Sigmoid colon (tissue), 7 donors: ENCODE measurements at regions of chr13 and their contacts with region 1.

Region 1: DNA sequence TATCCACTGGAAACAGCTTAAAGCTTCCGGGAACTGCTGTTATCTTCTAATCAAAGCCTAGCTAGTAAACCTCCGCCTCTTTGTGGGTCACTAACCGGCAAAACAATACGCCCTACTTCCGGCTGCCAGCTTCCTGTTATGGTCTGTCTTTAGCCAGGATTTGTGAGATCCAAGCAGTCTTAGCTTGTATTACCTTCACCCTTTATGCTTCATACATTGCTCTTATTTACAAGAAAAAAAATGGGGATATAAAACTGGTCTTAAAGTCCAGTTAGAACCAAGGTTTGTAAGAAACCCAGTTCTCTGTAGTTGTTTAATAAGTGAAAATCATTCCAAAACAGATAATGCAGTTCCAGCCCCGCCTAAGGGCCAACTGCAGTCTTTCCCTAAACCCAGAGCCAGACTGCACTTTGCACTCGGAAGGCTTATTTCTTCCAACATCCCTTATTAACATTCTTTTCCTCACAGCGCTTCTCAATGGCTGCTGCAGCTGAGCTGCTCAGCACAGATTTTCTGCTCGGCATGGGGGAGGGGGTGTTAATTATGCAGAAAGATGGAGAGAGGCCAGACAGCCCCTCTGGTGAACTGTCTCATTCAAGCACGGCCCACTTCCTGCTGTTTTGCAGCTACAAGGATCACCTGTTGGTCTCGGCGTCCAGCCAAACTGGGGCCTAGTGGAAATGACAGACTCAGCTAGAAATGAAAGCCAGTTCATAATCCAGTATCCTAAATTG is 368.4 kb downstream of the KLF12 start:
- DNase-seq: peak; percentile 91
- H3K4me3 ChIP-seq: peak overlapping the region in 1 of 4 donors; percentile 18
- H3K27ac ChIP-seq: peak overlapping the region; percentile 62 to 81 (median 72)
- H3K4me1 ChIP-seq: peaks cover 0 to 48% (median 36%) of the 10 kb centered on the region in 4 donors
- H3K27me3 ChIP-seq: no peaks in the 10 kb centered on the region
- CTCF ChIP-seq: no peak
- EP300 ChIP-seq: no peak
- POLR2A ChIP-seq: no peak

Region 2: GRCh38 chr13:72696579-72696978 is 1069.2 kb before region 1 on chr13:
- intact Hi-C with region 1: no loop called
- DNase-seq: no peak
- H3K4me3 ChIP-seq: no peak overlapping the region
- H3K27ac ChIP-seq: no peak overlapping the region
- H3K4me1 ChIP-seq: no peaks in the 10 kb centered on the region
- H3K27me3 ChIP-seq: no peaks in the 10 kb centered on the region
- CTCF ChIP-seq: no peak
- EP300 ChIP-seq: no peak
- POLR2A ChIP-seq: no peak

Region 3: GRCh38 chr13:73171926-73172325 is 593.9 kb before region 1 on chr13:
- intact Hi-C with region 1: no loop called
- DNase-seq: no peak
- H3K4me3 ChIP-seq: no peak overlapping the region
- H3K27ac ChIP-seq: no peak overlapping the region
- H3K4me1 ChIP-seq: no peaks in the 10 kb centered on the region
- H3K27me3 ChIP-seq: no peaks in the 10 kb centered on the region
- CTCF ChIP-seq: no peak
- EP300 ChIP-seq: no peak
- POLR2A ChIP-seq: no peak

Region 4: GRCh38 chr13:73715114-73715910 is 50.5 kb before region 1 on chr13:
- intact Hi-C with region 1: no loop called
- DNase-seq: no peak
- H3K4me3 ChIP-seq: no peak overlapping the region
- H3K27ac ChIP-seq: no peak overlapping the region
- H3K4me1 ChIP-seq: no peaks in the 10 kb centered on the region
- H3K27me3 ChIP-seq: no peaks in the 10 kb centered on the region
- CTCF ChIP-seq: no peak
- EP300 ChIP-seq: no peak
- POLR2A ChIP-seq: no peak

Region 5: GRCh38 chr13:73741760-73742159 is 24.1 kb before region 1 on chr13:
- intact Hi-C with region 1: loop called (anchors 2 kb)
- DNase-seq: no peak
- H3K4me3 ChIP-seq: no peak overlapping the region
- H3K27ac ChIP-seq: peak overlapping the region in 1 of 4 donors; percentile 56
- H3K4me1 ChIP-seq: peaks cover 0 to 46% (median 16%) of the 10 kb centered on the region in 4 donors
- H3K27me3 ChIP-seq: no peaks in the 10 kb centered on the region
- CTCF ChIP-seq: no peak
- EP300 ChIP-seq: no peak
- POLR2A ChIP-seq: no peak